ENCODE measurements at regions of chr7 and their contacts with region 1.

Region 1: DNA sequence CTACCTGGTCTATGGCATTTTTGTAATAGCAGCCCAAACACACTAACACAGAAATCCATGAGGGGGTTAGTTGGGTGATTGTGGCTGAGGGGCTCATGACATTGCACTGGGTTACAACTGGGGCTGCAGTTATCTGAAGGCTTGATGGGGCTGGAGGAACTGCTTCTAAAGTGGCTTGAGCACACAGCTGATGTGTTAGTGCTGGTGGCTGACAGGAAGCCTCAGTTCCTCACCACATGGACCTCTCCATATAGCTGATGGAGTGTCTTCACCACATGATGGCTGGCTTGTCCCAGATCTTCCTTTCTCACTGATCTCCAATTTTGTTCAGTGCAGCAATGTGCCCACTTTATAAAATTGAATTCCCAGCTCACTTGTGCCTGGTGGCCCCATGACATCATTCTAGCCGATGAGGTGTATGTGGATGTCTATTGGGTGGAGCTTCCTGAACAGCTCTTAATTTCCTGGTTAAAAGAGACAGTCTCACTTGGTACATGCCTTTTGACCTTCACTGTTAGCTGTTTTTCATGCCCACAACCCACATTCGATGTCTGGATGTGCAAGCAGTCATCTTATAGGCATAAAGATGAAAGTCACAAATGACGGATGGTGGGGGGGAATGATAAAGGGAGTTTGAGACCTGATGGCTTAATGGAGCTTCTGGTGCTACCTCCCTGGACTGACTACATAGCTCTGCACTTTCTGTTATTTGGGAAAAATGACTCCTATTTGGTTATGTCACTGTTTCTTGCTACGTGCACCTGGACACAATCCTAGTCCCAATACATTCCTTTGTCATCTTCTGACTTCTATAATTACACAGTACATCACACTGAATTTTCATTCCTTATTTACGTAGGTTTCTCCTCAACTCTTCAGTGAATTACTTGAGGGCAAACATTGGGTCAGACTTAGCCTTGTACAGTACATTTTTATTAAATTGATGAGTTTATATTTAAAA is 166.8 kb upstream of the BMPER start:
- DNase-seq: no peak
- CTCF ChIP-seq: no peak

Region 2: GRCh38 chr7:33757562-33758165 is 19.1 kb after region 1 on chr7:
- CTCF ChIA-PET with region 1: interaction called, 15 read pairs
- POLR2A ChIA-PET with region 1: no interaction called
- DNase-seq: peak; percentile 19
- CTCF ChIP-seq: peak; percentile 41

Region 3: DNA sequence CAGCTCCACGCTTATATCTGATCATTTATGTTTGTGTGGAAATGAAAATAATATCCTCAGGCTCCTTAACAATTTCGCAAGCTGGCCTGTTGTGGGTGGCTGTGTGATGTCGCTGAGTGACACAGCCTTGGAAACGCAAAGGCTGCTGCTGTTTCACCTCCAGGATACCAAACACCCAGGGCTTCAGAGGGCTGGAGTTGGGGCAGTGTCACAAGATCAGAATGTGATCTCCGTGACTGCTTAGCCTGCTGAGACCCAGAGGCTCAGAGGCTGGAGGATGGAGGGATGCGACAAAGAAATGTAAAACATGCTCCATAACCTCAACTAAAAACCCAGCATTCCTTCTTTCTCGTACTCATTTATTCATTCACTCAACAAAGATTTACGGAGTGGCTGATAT is 129.6 kb after region 1 on chr7:
- CTCF ChIA-PET with region 1: no interaction called
- POLR2A ChIA-PET with region 1: no interaction called
- DNase-seq: no peak
- CTCF ChIP-seq: no peak